ENCODE measurements at regions of chr12 and their contacts with region 1.

Region 1: GRCh38 chr12:109775172-109775881 is 57.9 kb downstream of the TRPV4 start:
- DNase-seq: peak; percentile 73 to 89 (median 85)
- H3K4me3 ChIP-seq: no peak overlapping the region
- H3K27ac ChIP-seq: no peak overlapping the region
- H3K4me1 ChIP-seq: peaks cover 12% of the 10 kb centered on the region
- H3K27me3 ChIP-seq: no peaks in the 10 kb centered on the region
- CTCF ChIP-seq: peak; percentile 70 to 87 (median 81)
- EP300 ChIP-seq: no peak
- POLR2A ChIP-seq: peak; percentile 12

Region 2: GRCh38 chr12:109428037-109428629 is 347.2 kb before region 1 on chr12:
- intact Hi-C with region 1: loop called in 2 of 4 experiments (anchors 5 to 10 kb)
- DNase-seq: peak; percentile 73 to 87 (median 83)
- H3K4me3 ChIP-seq: no peak overlapping the region
- H3K27ac ChIP-seq: no peak overlapping the region
- H3K4me1 ChIP-seq: no peaks in the 10 kb centered on the region
- H3K27me3 ChIP-seq: no peaks in the 10 kb centered on the region
- CTCF ChIP-seq: peak; percentile 70 to 91 (median 73)
- EP300 ChIP-seq: no peak
- POLR2A ChIP-seq: no peak

Region 3: GRCh38 chr12:109518820-109519665 is 256.3 kb before region 1 on chr12:
- intact Hi-C with region 1: loop called in 2 of 4 experiments (anchors 10 kb)
- DNase-seq: peak; percentile 57 to 78 (median 71)
- H3K4me3 ChIP-seq: no peak overlapping the region
- H3K27ac ChIP-seq: peak overlapping the region in 1 of 2 donors; percentile 51
- H3K4me1 ChIP-seq: peaks cover 2% of the 10 kb centered on the region
- H3K27me3 ChIP-seq: no peaks in the 10 kb centered on the region
- CTCF ChIP-seq: peak in 2 of 3 donors; percentile 39 to 55
- EP300 ChIP-seq: no peak
- POLR2A ChIP-seq: no peak

Region 4: GRCh38 chr12:109563291-109564284 is 211.7 kb before region 1 on chr12:
- intact Hi-C with region 1: no loop called
- DNase-seq: peak in 1 of 5 donors; percentile 33
- H3K4me3 ChIP-seq: no peak overlapping the region
- H3K27ac ChIP-seq: no peak overlapping the region
- H3K4me1 ChIP-seq: no peaks in the 10 kb centered on the region
- H3K27me3 ChIP-seq: no peaks in the 10 kb centered on the region
- CTCF ChIP-seq: no peak
- EP300 ChIP-seq: no peak
- POLR2A ChIP-seq: no peak

Region 5: DNA sequence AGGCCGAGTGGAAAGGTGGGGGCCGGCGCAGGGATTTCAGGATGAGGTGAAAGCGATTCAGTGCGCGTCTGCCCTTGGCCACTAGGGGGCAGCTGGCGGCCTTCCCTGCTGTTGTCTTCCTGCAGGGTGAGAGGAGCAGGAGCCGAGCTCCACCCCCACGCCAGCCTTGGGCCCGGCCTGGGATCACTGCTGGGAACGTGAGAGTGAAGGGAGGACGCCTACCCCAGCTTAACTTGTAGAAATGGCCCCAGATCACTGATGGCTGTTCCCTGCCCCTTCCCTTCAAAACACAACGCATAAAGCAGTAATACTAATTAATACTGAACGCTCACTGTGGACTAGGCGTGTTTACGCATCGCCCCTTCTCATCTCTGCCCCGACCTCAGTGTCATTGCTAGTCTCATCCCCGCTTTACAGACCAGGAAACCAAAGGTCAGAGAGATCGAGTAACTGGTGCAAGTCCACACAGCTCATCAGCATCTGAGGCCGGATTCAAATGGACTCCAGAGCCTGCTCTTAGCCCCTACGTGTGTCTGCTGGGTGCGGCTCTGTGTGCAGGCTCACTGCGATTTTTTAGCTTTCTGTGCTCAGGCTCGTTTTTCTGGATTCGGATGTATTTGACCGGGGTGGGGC is 177.4 kb before region 1 on chr12:
- intact Hi-C with region 1: loop called (anchors 1 to 5 kb)
- DNase-seq: peak; percentile 90 to 94 (median 92)
- H3K4me3 ChIP-seq: no peak overlapping the region
- H3K27ac ChIP-seq: no peak overlapping the region
- H3K4me1 ChIP-seq: peaks cover 2% of the 10 kb centered on the region
- H3K27me3 ChIP-seq: no peaks in the 10 kb centered on the region
- CTCF ChIP-seq: peak; percentile 90 to 92 (median 92)
- EP300 ChIP-seq: no peak
- POLR2A ChIP-seq: no peak

Region 6: GRCh38 chr12:109719236-109720022 is 55.9 kb before region 1 on chr12:
- intact Hi-C with region 1: loop called in 3 of 4 experiments (anchors 2 to 5 kb)
- DNase-seq: no peak
- H3K4me3 ChIP-seq: no peak overlapping the region
- H3K27ac ChIP-seq: peak overlapping the region in 1 of 2 donors; percentile 22
- H3K4me1 ChIP-seq: peaks cover 19% of the 10 kb centered on the region
- H3K27me3 ChIP-seq: no peaks in the 10 kb centered on the region
- CTCF ChIP-seq: no peak
- EP300 ChIP-seq: no peak
- POLR2A ChIP-seq: no peak

Measured in ovary (tissue), 10 donors.